Breast epithelium (tissue), 4 donors: ENCODE measurements at regions of chr17 and their contacts with region 1.

Region 1: DNA sequence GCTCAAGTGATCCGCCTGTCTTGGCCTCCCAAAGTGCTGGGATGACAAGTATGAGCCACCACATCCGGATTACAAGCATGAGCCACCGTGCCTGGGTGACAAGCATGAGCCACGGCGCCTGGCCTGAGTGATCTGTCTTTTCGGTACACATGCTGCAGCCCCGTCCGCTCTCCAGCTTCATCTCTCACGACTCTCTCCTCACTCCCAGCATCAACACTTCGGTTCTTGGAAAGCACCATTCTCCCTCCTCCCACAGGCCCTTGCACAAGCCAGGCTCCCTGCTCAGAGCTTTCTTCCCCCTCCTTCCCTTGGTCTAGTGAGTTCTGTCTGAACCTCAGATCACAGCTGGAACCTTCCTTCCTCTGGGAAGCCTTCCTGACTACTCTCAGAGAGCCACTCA is 6.5 kb upstream of the NCBP3 start:
- DNase-seq: no peak
- H3K4me3 ChIP-seq: no peak overlapping the region
- H3K27ac ChIP-seq: no peak overlapping the region
- H3K4me1 ChIP-seq: no peaks in the 10 kb centered on the region
- H3K27me3 ChIP-seq: no peaks in the 10 kb centered on the region
- CTCF ChIP-seq: no peak
- POLR2A ChIP-seq: no peak

Region 2: DNA sequence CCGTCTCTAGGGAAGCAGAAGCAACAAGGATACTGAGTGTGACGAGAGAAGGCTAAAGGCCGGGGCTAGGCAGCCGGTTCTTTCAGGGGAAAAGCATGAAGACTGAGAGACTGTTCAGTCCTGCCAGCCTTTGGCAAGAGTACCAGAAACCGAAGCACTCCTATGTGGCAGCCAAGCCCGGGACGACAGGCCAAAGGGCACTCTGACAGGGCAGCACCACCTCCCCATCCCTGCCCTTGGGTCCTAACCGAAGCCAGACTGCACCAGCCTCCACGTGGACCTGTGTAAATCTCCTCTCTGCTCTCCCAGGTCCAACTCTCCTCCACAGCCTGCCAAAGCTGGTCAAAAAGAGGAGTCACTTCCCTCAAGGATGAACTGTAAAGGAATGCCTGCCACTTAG is 812.5 kb after region 1 on chr17:
- intact Hi-C with region 1: loop called (anchors 10 kb)
- DNase-seq: peak in 1 of 2 donors; percentile 25
- H3K4me3 ChIP-seq: no peak overlapping the region
- H3K27ac ChIP-seq: peak overlapping the region in 1 of 2 donors; percentile 29
- H3K4me1 ChIP-seq: no peaks in the 10 kb centered on the region
- H3K27me3 ChIP-seq: no peaks in the 10 kb centered on the region
- CTCF ChIP-seq: no peak
- POLR2A ChIP-seq: no peak